ENCODE measurements at regions of chr2 and their contacts with region 1.

Region 1: DNA sequence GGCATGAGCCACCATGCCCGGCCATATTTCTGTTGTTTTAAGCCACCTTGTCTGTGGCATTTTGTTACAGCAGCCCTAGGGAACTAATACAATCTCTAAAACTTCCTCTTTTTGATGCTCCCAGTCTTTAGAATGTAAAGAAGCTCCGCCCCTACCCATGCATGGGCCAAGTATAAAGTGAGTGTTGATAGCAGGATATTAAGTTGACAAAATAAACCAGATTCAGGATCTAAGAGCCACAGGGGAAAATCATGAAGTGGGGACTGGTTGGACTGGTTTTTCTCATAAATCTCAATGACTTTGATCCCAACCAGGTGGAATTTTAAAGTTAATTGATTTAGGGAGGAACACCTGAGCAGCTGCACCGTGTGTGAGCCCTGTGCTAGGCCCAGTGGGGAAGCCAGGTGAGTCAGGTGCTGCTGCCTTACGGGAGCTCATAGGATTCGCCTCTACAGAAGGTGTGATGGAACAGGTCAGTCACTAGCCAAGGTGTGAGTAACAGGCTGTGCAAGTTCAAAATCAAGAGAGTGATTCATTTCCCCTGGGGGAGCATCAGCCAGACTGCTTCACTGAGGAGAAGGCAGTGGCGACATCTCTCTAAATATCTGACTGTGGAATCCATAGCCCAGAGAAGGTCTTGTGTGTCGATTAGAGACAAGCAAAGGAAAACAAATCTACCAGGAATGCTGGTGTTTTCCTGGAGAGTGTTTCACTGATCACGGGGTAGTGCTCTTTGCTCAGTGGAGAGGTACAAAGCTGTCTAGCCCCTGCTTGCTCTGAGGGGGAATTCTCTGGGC is 63.0 kb upstream of the MSH2 start:
- DNase-seq: no peak
- H3K4me3 ChIP-seq: no peak overlapping the region
- H3K27ac ChIP-seq: no peak overlapping the region
- H3K27me3 ChIP-seq: no peaks in the 10 kb centered on the region
- CTCF ChIP-seq: no peak

Region 2: GRCh38 chr2:46549166-46549844 is 790.6 kb before region 1 on chr2:
- CTCF ChIA-PET with region 1: interaction called, 10 read pairs
- POLR2A ChIA-PET with region 1: no interaction called
- DNase-seq: no peak
- H3K4me3 ChIP-seq: no peak overlapping the region
- H3K27ac ChIP-seq: no peak overlapping the region
- H3K27me3 ChIP-seq: no peaks in the 10 kb centered on the region
- CTCF ChIP-seq: no peak

Region 3: GRCh38 chr2:47237375-47237821 is 102.5 kb before region 1 on chr2:
- CTCF ChIA-PET with region 1: no interaction called
- POLR2A ChIA-PET with region 1: no interaction called
- DNase-seq: no peak
- H3K4me3 ChIP-seq: no peak overlapping the region
- H3K27ac ChIP-seq: no peak overlapping the region
- H3K27me3 ChIP-seq: no peaks in the 10 kb centered on the region
- CTCF ChIP-seq: no peak

Region 4: GRCh38 chr2:47357483-47357882 is 17.5 kb after region 1 on chr2:
- CTCF ChIA-PET with region 1: interaction called, 28 read pairs
- POLR2A ChIA-PET with region 1: no interaction called
- DNase-seq: no peak
- H3K4me3 ChIP-seq: no peak overlapping the region
- H3K27ac ChIP-seq: no peak overlapping the region
- H3K27me3 ChIP-seq: no peaks in the 10 kb centered on the region
- CTCF ChIP-seq: no peak

Region 5: GRCh38 chr2:47876912-47877311 is 537.0 kb after region 1 on chr2:
- CTCF ChIA-PET with region 1: interaction called, 11 read pairs
- POLR2A ChIA-PET with region 1: no interaction called
- DNase-seq: no peak
- H3K4me3 ChIP-seq: no peak overlapping the region
- H3K27ac ChIP-seq: no peak overlapping the region
- H3K27me3 ChIP-seq: no peaks in the 10 kb centered on the region
- CTCF ChIP-seq: no peak

Measured in AG04450 (cell line).